Panc1 (cell line): ENCODE measurements at regions of chr20 and their contacts with region 1.

Region 1: DNA sequence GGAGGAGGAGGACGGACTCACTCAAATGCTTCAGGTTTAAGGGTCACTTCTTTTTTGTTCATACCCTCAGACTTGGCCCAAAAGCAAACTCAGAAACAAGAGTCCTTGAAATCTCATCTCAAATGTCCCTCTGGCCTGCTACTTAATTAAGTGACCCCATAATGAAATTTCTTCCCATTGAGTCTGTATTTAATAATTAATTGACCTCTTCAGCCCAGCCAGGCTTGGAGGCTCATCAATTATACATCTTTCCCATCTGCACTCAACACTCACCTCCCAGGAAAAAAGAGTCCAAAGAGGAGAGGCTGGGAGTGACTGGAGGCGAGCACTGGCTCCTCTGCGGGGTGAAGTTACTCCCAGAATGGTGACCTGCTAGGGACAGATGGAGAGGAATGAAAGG is 90.5 kb upstream of the EYA2 start:
- DNase-seq: no peak
- ATAC-seq: no peak
- H3K4me3 ChIP-seq: no peak overlapping the region
- H3K27ac ChIP-seq: no peak overlapping the region
- H3K4me1 ChIP-seq: no peaks in the 10 kb centered on the region
- H3K27me3 ChIP-seq: peaks cover 2% of the 10 kb centered on the region
- CTCF ChIP-seq: no peak

Region 2: DNA sequence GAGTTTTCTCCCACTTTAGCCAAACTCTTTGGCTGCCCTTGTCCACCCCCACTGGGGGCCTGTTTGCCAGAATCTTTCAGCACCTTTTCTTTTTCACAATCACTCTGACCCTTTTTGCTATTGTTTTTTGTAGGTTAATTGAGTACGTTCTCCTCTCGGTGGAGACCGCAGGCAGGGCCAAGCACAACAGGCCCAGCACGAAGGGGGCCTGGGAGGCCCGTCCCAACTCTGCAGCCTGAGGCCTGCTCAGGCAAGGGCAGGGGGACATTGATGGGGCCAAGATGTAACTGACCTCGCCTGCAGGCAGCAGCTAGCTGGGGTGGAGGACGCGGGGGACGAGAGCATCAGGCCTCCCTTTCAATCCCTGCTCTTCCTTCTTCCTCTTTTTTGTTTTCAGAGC is 47.0 kb before region 1 on chr20:
- CTCF ChIA-PET with region 1: no interaction called
- POLR2A ChIA-PET with region 1: no interaction called
- in situ Hi-C with region 1: no loop called
- intact Hi-C with region 1: no loop called
- DNase-seq: no peak
- ATAC-seq: no peak
- H3K4me3 ChIP-seq: no peak overlapping the region
- H3K27ac ChIP-seq: no peak overlapping the region
- H3K4me1 ChIP-seq: 0 out of 2 replicates have a peak, but pooled peaks cover 4% of the 10 kb centered on the region
- H3K27me3 ChIP-seq: no peaks in the 10 kb centered on the region
- CTCF ChIP-seq: no peak

Region 3: GRCh38 chr20:46767127-46767761 is 36.9 kb before region 1 on chr20:
- CTCF ChIA-PET with region 1: interaction called, 10 read pairs
- POLR2A ChIA-PET with region 1: no interaction called
- in situ Hi-C with region 1: no loop called
- intact Hi-C with region 1: no loop called
- DNase-seq: no peak
- ATAC-seq: peak; percentile 85; the same call in 1 of the 2 replicates
- H3K4me3 ChIP-seq: no peak overlapping the region
- H3K27ac ChIP-seq: no peak overlapping the region
- H3K4me1 ChIP-seq: no peaks in the 10 kb centered on the region
- H3K27me3 ChIP-seq: no peaks in the 10 kb centered on the region
- CTCF ChIP-seq: peak; percentile 87